Left ventricle myocardium superior (tissue), 1 donor: ENCODE measurements at regions of chr20 and their contacts with region 1.

Region 1: GRCh38 chr20:49078296-49078695 is 32.2 kb downstream of the CSE1L start:
- DNase-seq: no peak
- ATAC-seq: no peak

Region 2: DNA sequence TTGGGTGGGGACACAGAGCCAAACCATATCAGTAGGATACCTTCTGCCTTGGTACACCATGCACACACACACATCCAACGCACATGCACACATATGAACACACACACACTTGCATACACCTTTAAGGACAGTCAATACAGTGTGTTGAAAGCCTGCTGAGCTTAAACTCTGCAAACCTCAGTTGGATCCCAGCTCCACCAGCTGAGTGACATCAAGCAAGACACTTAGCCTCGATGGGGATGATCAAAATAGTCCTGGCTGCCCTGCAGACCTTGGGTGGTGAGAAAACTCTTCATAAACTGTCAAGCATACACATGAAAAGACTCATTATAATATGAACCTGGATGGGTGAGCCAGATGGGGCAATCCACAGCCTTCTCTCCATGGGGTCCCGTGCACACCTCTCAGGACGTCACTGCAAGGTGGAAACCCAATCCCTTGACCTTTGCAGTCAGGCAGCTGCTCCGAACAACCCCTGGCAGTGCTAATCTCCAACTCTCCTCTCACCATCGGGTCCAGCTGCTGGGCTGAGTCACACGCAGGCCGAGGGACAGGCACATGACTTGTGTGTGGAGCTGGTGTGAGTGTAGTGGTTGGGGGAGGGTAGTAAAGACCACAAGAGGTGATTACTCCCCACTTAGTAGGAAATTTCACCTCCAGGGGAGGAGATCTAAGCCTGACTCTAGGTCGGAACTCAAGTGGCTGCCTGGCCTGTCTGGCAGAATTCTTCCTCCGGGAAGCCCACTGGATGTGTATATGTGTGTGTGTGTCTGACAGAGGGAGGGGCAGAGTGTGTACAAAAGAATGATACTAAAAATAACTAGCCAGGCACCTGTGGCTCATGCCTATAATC is 224.5 kb before region 1 on chr20:
- intact Hi-C with region 1: no loop called
- DNase-seq: no peak
- ATAC-seq: peak; percentile 77

Region 3: DNA sequence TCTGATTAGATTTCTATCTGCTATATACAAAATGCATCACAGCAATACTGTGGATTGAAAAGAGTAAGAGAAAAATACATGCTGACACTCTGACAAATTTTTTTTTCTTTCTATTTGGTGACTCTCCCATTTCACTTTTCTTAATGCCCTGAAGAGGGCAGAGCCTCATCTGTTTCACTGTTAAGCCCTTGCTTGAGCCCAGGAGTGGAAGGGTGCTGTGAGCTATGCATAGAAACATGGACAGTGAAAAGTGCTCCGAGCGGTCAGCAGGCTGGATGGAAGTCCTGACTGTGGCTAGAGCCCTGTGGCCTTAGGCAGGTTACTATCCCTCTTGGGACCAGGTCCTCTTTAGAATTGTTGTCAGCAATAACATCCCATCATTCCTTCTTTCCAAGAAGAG is 49.6 kb before region 1 on chr20:
- intact Hi-C with region 1: loop called (anchors 10 kb)
- DNase-seq: no peak
- ATAC-seq: no peak